ENCODE measurements at regions of chr19 and their contacts with region 1.

Region 1: DNA sequence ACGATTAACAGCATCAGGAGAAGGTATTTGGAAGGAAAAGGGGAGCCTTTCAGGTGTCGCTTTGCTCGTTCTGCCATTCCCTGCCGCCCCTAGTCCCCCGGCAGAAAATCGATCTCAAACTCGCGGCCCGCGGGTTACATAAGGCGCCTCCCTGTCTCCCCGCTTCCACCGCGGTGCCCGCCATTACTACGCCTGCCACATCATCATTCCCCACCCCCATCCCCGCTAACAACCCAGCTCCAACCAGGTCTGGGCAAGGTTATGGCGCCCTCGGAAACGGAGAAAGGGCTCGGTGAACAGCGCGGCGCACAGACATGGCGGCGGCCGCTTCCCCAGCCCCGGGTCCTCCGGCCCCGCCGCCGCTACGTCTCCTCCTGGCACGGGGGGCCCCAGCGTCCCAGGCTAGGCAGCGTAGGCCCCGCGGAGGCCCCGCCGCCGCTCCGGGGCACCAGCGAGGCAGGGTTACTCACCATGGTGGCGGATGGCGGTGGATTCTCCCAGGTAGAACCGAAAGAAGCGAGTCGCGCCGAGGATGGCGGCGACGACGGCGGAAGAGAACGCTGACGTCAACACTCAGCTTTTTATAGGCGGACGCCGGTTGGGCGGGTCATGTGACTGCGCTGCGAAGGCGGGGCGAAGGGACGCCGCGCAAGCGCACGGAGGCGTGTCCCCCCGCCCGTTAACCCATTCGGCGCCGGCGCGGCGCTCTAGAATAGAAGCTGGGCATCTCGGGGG is at the start of gene EEF2:
- DNase-seq: peak; percentile 91
- ATAC-seq: peak; percentile 38
- H3K4me3 Mint-ChIP-seq: peak within 1 kb of the TSS; percentile 96
- H3K27ac Mint-ChIP-seq: peak within 1 kb of the TSS; percentile 91
- H3K4me1 Mint-ChIP-seq: peaks cover 65% of the 10 kb centered on the region
- H3K27me3 Mint-ChIP-seq: no peaks in the 10 kb centered on the region
- CTCF ChIP-seq: no peak
- total RNA-seq, gene EEF2: 2,958 and 3,229 TPM in 2 replicates

Region 2: GRCh38 chr19:3970808-3971598 is 14.1 kb before region 1 on chr19 and contains the start of gene DAPK3:
- CTCF ChIA-PET with region 1: interaction called, 6 read pairs
- POLR2A ChIA-PET with region 1: interaction called, 63 read pairs
- intact Hi-C with region 1: loop called (anchors 2 kb)
- DNase-seq: peak; percentile 94
- ATAC-seq: peak; percentile 97
- H3K4me3 Mint-ChIP-seq: peak within 1 kb of the TSS; percentile 88
- H3K27ac Mint-ChIP-seq: peak within 1 kb of the TSS; percentile 84
- H3K4me1 Mint-ChIP-seq: peaks cover 27% of the 10 kb centered on the region
- H3K27me3 Mint-ChIP-seq: no peaks in the 10 kb centered on the region
- CTCF ChIP-seq: no peak
- total RNA-seq, gene DAPK3: 37.5 and 42.2 TPM in 2 replicates

Region 3: GRCh38 chr19:4065430-4066175 is 80.5 kb after region 1 on chr19:
- CTCF ChIA-PET with region 1: no interaction called
- POLR2A ChIA-PET with region 1: interaction called, 16 read pairs
- intact Hi-C with region 1: loop called (anchors 1 kb)
- DNase-seq: peak; percentile 99
- ATAC-seq: peak; percentile 76
- H3K4me3 Mint-ChIP-seq: peak overlapping the region; percentile 70
- H3K27ac Mint-ChIP-seq: no peak overlapping the region
- H3K4me1 Mint-ChIP-seq: peaks cover 50% of the 10 kb centered on the region
- H3K27me3 Mint-ChIP-seq: no peaks in the 10 kb centered on the region
- CTCF ChIP-seq: no peak

Region 4: DNA sequence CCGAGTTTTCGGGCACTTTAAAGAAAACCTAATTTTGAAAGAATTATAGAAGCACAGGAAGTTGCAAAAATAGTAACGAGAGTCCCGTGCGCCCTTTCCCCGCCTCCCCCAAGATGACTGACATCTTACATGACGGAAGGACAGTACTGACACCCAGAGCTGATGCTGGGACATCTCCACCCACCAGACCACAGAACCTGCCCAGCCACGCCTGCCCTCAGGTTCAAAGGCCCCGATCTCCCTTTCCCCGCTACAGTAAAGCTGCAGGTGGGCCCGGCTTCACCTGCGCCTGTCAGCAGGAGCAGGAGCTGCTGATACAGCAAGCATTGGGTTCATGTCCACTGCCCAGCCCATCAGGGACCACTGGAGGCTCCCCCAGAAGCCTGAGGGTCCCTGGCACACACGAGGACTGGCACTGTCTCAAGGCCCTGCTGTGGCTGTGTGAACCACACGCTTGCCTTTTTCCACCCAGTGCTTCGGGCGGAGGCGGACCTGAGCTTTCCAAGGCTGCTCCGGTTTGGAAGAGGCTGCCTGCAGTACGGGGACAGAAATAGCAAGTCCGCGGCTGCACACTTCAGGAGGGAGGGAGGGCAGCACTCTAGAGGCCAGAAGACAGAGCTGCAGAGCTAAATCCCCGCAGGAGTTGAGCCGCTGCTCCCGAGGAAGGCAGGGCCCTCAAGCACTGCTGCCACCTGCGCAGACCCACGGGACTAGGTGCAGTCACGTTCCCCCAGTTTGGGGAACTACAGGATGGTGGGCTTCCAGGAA is 130.2 kb after region 1 on chr19:
- CTCF ChIA-PET with region 1: interaction called, 3 read pairs
- POLR2A ChIA-PET with region 1: interaction called, 31 read pairs
- intact Hi-C with region 1: loop called (anchors 5 kb)
- DNase-seq: peak; percentile 36
- ATAC-seq: peak; percentile 91
- H3K4me3 Mint-ChIP-seq: peak overlapping the region; percentile 72
- H3K27ac Mint-ChIP-seq: peak overlapping the region; percentile 86
- H3K4me1 Mint-ChIP-seq: peaks cover 54% of the 10 kb centered on the region
- H3K27me3 Mint-ChIP-seq: no peaks in the 10 kb centered on the region
- CTCF ChIP-seq: no peak

Region 5: DNA sequence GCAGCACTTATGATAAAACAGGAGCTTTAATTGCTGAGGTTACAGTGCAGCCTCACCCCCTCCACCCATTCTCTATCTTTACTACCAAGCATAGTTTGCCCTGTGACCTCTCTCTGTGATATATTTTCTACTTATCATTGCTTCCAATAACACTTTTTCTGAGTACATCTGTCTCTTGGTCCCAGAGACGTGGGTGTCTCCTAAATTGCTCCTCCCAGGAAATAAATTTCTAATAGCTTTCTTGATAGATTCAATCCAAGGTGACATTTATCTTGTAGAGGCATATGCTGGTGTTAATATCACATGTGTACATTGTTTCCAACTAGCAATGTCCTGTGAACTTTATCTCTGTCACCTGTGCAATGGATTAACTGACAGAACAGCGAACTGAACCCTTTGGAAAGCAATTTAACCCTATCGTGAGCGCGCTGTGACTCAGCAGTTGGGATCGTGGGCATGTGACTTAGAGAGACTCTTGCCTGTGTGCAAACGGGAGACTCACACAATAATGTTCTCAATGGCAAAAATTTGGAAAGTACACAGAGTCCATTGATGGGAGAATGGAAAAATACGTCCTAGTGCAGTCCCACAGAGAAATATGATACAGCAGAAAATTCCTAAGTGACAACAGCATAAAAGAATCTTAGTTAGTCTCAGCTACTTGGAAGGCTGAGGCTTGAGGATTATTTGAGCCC is 145.8 kb after region 1 on chr19:
- CTCF ChIA-PET with region 1: no interaction called
- POLR2A ChIA-PET with region 1: no interaction called
- intact Hi-C with region 1: no loop called
- DNase-seq: no peak
- ATAC-seq: no peak
- H3K4me3 Mint-ChIP-seq: no peak overlapping the region
- H3K27ac Mint-ChIP-seq: no peak overlapping the region
- H3K4me1 Mint-ChIP-seq: no peaks in the 10 kb centered on the region
- H3K27me3 Mint-ChIP-seq: peaks cover 3% of the 10 kb centered on the region
- CTCF ChIP-seq: no peak

Region 6: DNA sequence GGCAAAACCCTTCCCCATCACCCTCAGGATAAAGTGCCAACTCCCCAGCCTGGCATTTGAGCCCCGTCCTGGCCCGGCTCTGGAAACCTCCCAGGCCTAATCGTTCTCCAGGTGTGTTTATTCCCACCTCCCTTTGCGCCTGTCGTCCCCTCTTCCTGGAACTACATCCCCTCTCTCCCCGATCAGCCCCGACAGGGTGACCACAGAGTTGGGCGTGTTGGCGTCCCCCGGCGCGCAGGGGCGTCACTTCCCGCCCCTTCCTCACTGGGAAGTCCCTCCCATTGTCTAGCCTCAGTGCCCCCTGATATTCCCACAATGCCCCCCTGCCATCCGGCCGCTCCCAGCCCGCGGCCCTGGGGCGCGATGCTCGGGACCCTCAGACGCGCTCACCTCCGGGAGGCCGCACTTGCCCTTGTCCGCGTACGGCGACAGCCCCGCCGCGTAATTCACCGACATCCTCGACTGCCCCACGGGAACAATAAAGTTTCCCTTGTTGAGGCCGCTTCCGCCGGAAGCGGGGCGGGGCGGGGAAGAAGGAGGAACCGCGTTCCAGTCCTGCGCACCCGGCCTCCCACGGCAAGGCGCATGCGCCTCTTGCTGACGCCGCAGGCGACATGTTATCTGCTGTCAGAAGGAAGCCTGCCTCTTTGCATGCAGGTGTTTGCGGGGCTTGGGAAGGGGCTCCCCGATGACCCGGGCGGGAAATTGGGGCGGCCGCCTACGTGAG is 197.2 kb after region 1 on chr19 and contains the starts of genes ANKRD24 and SIRT6:
- CTCF ChIA-PET with region 1: no interaction called
- POLR2A ChIA-PET with region 1: interaction called, 3 read pairs
- intact Hi-C with region 1: loop called (anchors 1 kb)
- DNase-seq: peak; percentile 96
- ATAC-seq: peak; percentile 84
- H3K4me3 Mint-ChIP-seq: peak within 1 kb of the TSS; percentile 97
- H3K27ac Mint-ChIP-seq: peak within 1 kb of the TSS; percentile 94
- H3K4me1 Mint-ChIP-seq: peaks cover 35% of the 10 kb centered on the region
- H3K27me3 Mint-ChIP-seq: no peaks in the 10 kb centered on the region
- CTCF ChIP-seq: no peak
- total RNA-seq, gene ANKRD24: 0.42 and 0.49 TPM in 2 replicates
- total RNA-seq, gene SIRT6: 34.1 and 36.8 TPM in 2 replicates

Region 7: DNA sequence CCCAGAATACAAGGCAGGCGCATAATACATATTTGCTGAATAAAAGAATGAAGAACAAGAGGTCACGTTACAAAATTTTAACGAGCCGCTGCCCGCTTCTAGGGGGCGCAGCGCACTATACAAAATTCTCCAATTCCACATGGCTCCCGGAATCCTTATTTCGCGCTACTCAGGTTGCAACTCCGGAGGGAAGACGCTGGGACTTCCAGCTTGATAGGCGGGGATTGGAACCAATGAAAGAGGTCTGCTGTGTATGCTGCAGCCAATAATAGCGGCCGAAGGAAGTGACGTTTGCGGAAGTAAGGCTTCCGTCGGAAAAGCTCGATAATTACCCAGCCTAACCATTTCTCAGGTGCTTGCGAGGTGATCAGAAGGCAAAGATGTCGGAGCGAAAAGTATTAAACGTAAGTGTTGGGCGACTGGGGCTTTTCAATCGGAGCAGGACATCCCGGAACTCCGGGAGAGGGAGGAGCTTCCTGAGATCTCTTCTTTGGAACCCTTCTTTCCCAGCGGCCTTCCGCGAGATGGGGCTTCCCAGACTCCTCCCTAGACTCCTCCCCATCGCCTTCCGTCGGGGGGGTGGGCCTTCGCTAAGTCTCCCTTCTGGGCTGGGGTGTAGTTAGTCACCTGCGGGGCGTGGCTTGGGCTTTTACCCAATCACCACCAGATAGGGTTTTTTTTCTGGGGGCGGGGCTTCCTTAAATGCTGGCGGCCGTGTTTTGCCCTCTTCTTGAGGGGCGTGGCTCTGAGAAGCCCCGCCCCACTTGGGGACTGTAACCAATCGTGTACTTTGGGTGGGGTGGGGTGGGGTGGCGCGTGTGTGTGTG is 261.9 kb after region 1 on chr19 and contains the start of gene YJU2:
- CTCF ChIA-PET with region 1: interaction called, 7 read pairs
- POLR2A ChIA-PET with region 1: interaction called, 13 read pairs
- intact Hi-C with region 1: no loop called
- DNase-seq: peak; percentile 89
- ATAC-seq: peak; percentile 96
- H3K4me3 Mint-ChIP-seq: peak within 1 kb of the TSS; percentile 90
- H3K27ac Mint-ChIP-seq: peak within 1 kb of the TSS; percentile 96
- H3K4me1 Mint-ChIP-seq: peaks cover 35% of the 10 kb centered on the region
- H3K27me3 Mint-ChIP-seq: no peaks in the 10 kb centered on the region
- CTCF ChIP-seq: no peak
- total RNA-seq, gene YJU2: 40.7 and 43.0 TPM in 2 replicates